Ascending aorta (tissue), 2 donors: ENCODE measurements at regions of chr12 and their contacts with region 1.

Region 1: GRCh38 chr12:48105862-48106680 is at the start of gene SENP1:
- DNase-seq: peak; percentile 31 to 92
- H3K4me3 ChIP-seq: peak within 1 kb of the TSS; percentile 83 to 93
- H3K27ac ChIP-seq: peak within 1 kb of the TSS; percentile 78 to 96
- H3K4me1 ChIP-seq: peaks cover 4 to 12% of the 10 kb centered on the region in 2 donors
- H3K27me3 ChIP-seq: no peaks in the 10 kb centered on the region
- CTCF ChIP-seq: peak in 1 of 3 experiments; percentile 20
- total RNA-seq, gene SENP1: 11.3 TPM

Region 2: DNA sequence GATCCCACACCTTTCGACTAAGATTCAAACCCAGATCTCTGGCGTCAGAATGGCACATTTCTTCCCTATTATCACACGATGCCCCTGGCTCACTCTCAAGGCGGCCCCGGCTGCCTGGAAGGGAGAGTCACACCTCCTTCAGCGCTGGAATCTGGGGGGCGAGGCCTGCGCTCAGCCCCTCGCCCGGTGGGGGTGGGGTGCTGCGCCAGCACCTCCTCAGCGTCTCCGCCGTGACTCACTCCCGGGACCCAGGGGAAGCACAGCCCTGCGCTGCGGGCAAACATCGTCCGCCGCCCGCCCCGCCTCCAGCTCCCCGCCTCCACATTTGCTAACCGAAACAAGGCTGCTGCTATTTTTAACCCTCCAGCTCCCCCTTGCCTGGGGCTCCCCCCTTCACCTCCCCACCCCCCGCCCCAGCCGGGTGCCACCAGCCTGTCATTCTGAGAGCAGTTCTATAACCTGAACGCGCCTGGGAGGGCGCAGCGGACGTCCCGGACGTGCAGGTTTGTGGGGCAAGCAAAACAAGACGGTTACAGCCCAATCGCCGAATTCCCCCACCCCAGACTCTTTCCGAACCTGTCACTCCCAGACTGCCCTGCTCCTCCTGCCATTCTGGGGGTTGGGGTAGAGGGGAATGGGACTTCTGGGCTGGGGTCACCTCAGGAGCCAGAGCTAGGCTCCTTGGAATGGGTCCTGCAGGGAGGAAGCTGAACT is 293.1 kb before region 1 on chr12:
- intact Hi-C with region 1: no loop called
- DNase-seq: peak; percentile 86 to 98
- H3K4me3 ChIP-seq: peak overlapping the region; percentile 28 to 61
- H3K27ac ChIP-seq: peak overlapping the region; percentile 97
- H3K4me1 ChIP-seq: peaks cover 56 to 87% of the 10 kb centered on the region in 2 donors
- H3K27me3 ChIP-seq: no peaks in the 10 kb centered on the region
- CTCF ChIP-seq: peak in 1 of 3 experiments; percentile 6

Region 3: GRCh38 chr12:47904713-47905310 is 201.3 kb before region 1 on chr12 and contains the start of gene VDR:
- intact Hi-C with region 1: loop called (anchors 10 kb)
- DNase-seq: peak; percentile 59 to 89
- H3K4me3 ChIP-seq: peak within 1 kb of the TSS; percentile 61 to 78
- H3K27ac ChIP-seq: peak within 1 kb of the TSS; percentile 47 to 65
- H3K4me1 ChIP-seq: peaks cover 0 to 21% of the 10 kb centered on the region in 2 donors
- H3K27me3 ChIP-seq: no peaks in the 10 kb centered on the region
- CTCF ChIP-seq: peak in 1 of 3 experiments; percentile 10
- total RNA-seq, gene VDR: 13.1 TPM

Region 4: GRCh38 chr12:48119078-48119833 is 13.2 kb after region 1 on chr12 and contains the start of gene PFKM:
- intact Hi-C with region 1: loop called (anchors 1 kb)
- DNase-seq: peak; percentile 39 to 93
- H3K4me3 ChIP-seq: peak within 1 kb of the TSS; percentile 63 to 79
- H3K27ac ChIP-seq: peak within 1 kb of the TSS; percentile 9 to 63
- H3K4me1 ChIP-seq: peaks cover 2 to 5% of the 10 kb centered on the region in 2 donors
- H3K27me3 ChIP-seq: no peaks in the 10 kb centered on the region
- CTCF ChIP-seq: no peak
- total RNA-seq, gene PFKM: 19.6 TPM

Region 5: DNA sequence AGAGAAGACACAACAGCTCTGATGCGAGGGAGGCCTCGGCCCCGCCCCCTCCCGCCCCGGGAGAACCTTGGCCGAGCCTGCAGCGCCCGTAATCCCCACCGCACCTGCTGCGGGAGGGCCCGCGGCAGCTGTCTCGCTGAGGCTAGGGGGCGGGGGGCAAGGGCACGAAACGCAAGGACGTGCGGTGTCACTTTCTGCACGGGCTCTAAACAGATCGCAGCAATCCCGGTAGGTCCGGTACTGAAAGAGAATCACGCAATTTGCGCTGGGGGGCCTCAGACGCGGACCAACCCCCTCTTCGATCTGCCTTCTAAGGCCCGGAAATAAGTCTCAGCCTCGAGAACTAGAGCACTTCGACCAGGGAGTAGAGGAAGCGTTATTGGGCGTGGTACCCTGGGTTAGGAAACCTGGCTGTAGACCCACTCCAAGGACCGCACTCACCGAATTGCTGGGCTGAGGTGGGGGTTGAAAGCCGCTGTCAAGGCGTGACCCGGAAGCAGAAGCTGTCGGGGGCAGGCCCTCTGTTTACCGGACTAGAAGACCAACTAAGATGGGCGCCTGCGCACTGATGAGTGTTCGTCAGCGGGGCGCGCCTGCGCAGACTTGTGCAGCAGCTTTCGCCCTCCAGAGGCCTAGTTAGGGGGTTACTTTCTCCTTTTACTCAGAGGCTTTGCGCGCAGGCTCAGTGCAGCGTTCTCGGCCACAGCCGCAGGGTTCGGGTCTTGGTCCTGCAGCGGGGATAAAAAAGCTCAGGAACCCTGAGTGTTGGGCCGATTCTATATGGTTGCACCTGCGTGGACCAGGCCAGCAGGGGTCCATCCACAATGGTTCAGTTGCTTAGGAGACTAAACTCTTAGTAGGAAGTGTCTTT is 51.2 kb after region 1 on chr12 and contains the start of gene ASB8:
- intact Hi-C with region 1: loop called (anchors 1 kb)
- DNase-seq: peak; percentile 94 to 100
- H3K4me3 ChIP-seq: peak within 1 kb of the TSS; percentile 75 to 88
- H3K27ac ChIP-seq: peak within 1 kb of the TSS; percentile 76 to 78
- H3K4me1 ChIP-seq: peaks cover 0 to 8% of the 10 kb centered on the region in 2 donors
- H3K27me3 ChIP-seq: no peaks in the 10 kb centered on the region
- CTCF ChIP-seq: peak; percentile 57 to 63 (median 60)
- total RNA-seq, gene ASB8: 23.7 TPM

Region 6: GRCh38 chr12:48350249-48351021 is 244.4 kb after region 1 on chr12 and contains the start of gene ZNF641:
- intact Hi-C with region 1: loop called (anchors 5 kb)
- DNase-seq: peak; percentile 46 to 91
- H3K4me3 ChIP-seq: peak within 1 kb of the TSS; percentile 80 to 87
- H3K27ac ChIP-seq: peak within 1 kb of the TSS; percentile 91 to 98
- H3K4me1 ChIP-seq: peaks cover 0 to 5% of the 10 kb centered on the region in 2 donors
- H3K27me3 ChIP-seq: no peaks in the 10 kb centered on the region
- CTCF ChIP-seq: no peak
- total RNA-seq, gene ZNF641: 10.9 TPM

Region 7: DNA sequence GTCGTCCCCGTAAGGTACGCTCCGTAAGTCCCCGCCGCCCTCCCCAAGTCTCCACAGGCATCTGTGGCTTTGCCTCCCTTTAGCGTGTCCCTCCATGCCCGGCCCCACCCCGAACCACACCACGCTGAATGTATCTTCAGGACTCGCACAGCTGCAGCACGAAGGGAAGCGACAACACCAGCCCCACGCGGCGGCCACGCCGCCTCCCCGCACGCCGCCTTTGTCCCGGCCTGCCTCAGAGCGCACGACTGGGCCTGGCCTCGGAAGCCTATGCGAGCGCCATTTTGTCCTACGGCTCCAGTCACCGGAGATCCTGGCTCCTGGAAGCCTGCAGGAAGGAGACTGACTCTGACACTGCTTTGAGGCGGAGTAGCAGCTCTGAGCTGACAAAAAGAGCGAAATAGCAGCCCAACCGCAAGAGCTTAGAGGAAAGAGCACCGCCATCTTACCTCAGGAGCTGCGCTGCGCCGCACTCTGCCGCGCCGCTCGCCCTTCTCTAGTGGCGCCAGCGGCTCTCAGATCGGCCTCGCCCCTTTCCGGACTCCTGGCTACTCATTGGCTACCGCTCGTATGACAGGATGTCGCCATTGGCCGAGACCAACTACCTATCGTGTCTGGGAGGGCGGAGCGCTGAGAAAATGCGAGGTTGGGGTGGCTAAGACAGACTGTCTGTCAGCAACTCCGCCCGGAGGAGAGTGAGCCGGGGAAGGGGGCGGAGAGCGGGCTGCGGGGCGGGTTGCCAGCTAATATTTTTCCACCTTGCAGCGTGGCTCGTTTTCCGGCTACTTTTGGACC is 575.9 kb after region 1 on chr12 and contains the start of gene KANSL2:
- intact Hi-C with region 1: loop called (anchors 10 kb)
- DNase-seq: peak; percentile 99
- H3K4me3 ChIP-seq: peak within 1 kb of the TSS; percentile 75 to 95
- H3K27ac ChIP-seq: peak within 1 kb of the TSS; percentile 87 to 94
- H3K4me1 ChIP-seq: peaks cover 20 to 32% of the 10 kb centered on the region in 2 donors
- H3K27me3 ChIP-seq: no peaks in the 10 kb centered on the region
- CTCF ChIP-seq: no peak
- total RNA-seq, gene KANSL2: 30.1 TPM